Activated CD4-positive, alpha-beta T cell treated with anti-CD3 and anti-CD28 coated beads, Interleukin-2, amount 10 ng/mL, durations not matched to agents 7 days and 5 days (primary cell): ENCODE measurements at regions of chr5 and their contacts with region 1.

Region 1: DNA sequence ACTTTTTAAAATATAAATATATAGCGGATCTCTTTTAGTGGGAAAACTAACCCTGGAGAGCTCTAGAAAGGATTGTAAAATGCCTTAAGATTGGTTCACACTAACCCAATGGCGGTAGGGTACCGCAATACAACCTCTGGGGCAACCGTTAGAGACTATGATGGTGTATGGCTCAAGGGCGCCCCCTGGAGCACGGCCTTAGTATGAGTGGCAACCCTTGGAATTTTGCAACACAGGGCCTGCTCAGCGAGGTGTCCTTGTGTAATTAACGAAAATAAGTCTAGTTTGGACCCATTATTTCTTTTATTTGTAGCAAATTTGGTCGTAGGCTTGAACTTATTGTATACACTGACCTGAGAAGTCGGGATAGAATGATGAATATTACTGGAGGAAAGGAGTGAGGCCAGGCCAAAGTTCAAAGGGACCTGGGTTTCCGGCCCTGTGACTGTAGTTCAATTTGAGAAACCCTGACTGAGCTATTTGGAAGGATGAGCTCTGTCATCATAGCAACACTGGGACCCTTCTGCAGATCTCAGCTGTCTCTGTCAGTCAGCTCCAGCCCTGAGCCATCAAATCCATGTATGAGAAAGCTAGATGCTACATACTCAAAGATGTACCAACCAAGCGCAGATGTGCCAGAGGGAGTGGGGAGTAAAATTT is 54.8 kb downstream of the CAMK4 start:
- DNase-seq: peak; percentile 85
- H3K4me3 Mint-ChIP-seq: no peak overlapping the region
- H3K27ac Mint-ChIP-seq: no peak overlapping the region
- H3K4me1 Mint-ChIP-seq: peaks cover 51% of the 10 kb centered on the region
- H3K27me3 Mint-ChIP-seq: no peaks in the 10 kb centered on the region

Region 2: GRCh38 chr5:111158105-111158744 is 120.8 kb before region 1 on chr5:
- CTCF ChIA-PET with region 1: interaction called, 25 read pairs
- POLR2A ChIA-PET with region 1: no interaction called
- DNase-seq: peak; percentile 86
- H3K4me3 Mint-ChIP-seq: no peak overlapping the region
- H3K27ac Mint-ChIP-seq: no peak overlapping the region
- H3K4me1 Mint-ChIP-seq: peaks cover 8% of the 10 kb centered on the region
- H3K27me3 Mint-ChIP-seq: no peaks in the 10 kb centered on the region